ENCODE measurements at regions of chr1 and their contacts with region 1.

Region 1: GRCh38 chr1:202987922-202988583 is 19.1 kb upstream of the TMEM183A start:
- DNase-seq: no peak
- H3K4me3 Mint-ChIP-seq: no peak overlapping the region
- H3K27ac Mint-ChIP-seq: no peak overlapping the region
- H3K4me1 Mint-ChIP-seq: no peaks in the 10 kb centered on the region
- H3K27me3 Mint-ChIP-seq: peaks cover 37% of the 10 kb centered on the region
- CTCF ChIP-seq: no peak

Region 2: DNA sequence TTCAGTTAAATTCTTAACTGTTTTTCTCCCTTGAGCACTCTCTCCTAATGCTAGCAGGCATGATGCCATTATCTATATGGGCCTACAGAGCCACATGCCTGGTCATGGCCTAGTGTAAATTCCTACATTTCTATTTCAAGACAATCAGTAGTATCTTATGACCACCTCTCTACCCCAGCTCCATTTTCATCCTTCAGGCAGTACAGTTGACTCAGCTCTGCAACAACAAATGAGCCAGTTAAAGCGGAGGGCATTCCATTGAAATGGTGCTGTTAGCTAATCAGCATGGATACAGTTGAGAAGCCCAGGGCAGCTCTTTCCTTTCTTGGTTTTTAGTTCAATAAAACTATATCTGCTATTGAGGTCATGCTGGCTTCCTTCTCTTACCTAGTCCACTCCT is 489.5 kb before region 1 on chr1:
- CTCF ChIA-PET with region 1: no interaction called
- POLR2A ChIA-PET with region 1: no interaction called
- intact Hi-C with region 1: no loop called
- DNase-seq: no peak
- H3K4me3 Mint-ChIP-seq: no peak overlapping the region
- H3K27ac Mint-ChIP-seq: no peak overlapping the region
- H3K4me1 Mint-ChIP-seq: no peaks in the 10 kb centered on the region
- H3K27me3 Mint-ChIP-seq: no peaks in the 10 kb centered on the region
- CTCF ChIP-seq: no peak

Region 3: GRCh38 chr1:202852163-202852904 is 135.7 kb before region 1 on chr1:
- CTCF ChIA-PET with region 1: no interaction called
- POLR2A ChIA-PET with region 1: no interaction called
- intact Hi-C with region 1: no loop called
- DNase-seq: peak; percentile 88
- H3K4me3 Mint-ChIP-seq: no peak overlapping the region
- H3K27ac Mint-ChIP-seq: no peak overlapping the region
- H3K4me1 Mint-ChIP-seq: no peaks in the 10 kb centered on the region
- H3K27me3 Mint-ChIP-seq: no peaks in the 10 kb centered on the region
- CTCF ChIP-seq: peak; percentile 87

Region 4: DNA sequence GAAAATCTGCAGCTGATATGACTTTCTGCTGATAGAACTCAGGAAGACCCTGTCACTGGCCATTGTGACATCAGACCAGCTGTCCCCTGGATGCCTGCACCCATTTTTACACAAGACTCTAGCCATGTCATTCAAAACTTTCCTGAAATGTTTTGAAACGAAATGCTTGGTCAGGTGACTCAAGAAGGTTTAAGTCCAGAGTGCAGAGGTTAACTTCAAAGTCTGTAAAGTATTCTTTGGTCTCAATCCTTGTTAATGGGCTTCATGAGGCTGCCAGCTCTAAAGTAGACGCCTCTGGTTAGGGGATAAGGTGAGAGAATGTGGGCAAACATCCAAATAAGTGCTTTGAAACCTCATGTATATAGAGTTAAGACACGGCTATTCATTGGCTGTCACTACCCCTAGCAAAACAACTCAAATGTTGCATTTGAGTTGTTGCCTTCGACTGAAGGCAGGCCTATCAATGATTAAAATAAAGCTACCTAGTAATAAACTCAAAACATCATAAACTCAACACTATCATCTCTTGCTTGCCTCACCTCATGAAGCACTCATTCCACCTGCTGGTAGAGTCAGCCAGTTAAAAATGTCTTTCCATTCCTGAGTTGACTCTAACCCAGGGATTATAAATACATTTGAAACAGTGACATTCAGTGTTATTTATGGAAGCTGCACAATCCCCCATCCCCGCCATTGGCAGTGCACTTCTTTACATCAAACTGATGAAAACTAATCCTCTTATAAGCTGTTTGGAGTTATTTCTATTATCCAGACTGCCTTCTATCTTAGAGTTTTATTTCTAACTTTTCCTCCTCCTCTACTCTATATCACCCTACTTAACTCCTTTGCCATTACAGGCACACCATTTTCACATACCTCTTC is 125.1 kb before region 1 on chr1:
- CTCF ChIA-PET with region 1: no interaction called
- POLR2A ChIA-PET with region 1: no interaction called
- intact Hi-C with region 1: no loop called
- DNase-seq: no peak
- H3K4me3 Mint-ChIP-seq: peak overlapping the region; percentile 87
- H3K27ac Mint-ChIP-seq: no peak overlapping the region
- H3K4me1 Mint-ChIP-seq: peaks cover 6% of the 10 kb centered on the region
- H3K27me3 Mint-ChIP-seq: peaks cover 45% of the 10 kb centered on the region
- CTCF ChIP-seq: no peak

Region 5: GRCh38 chr1:202957733-202958543 is 30.1 kb before region 1 on chr1 and contains the start of gene ADIPOR1:
- CTCF ChIA-PET with region 1: interaction called, 4 read pairs
- POLR2A ChIA-PET with region 1: interaction called, 10 read pairs
- intact Hi-C with region 1: no loop called
- DNase-seq: peak; percentile 96
- H3K4me3 Mint-ChIP-seq: peak within 1 kb of the TSS; percentile 75
- H3K27ac Mint-ChIP-seq: peak within 1 kb of the TSS; percentile 65
- H3K4me1 Mint-ChIP-seq: peaks cover 60% of the 10 kb centered on the region
- H3K27me3 Mint-ChIP-seq: no peaks in the 10 kb centered on the region
- CTCF ChIP-seq: peak; percentile 19
- total RNA-seq, gene ADIPOR1: 157 and 168 TPM in 2 replicates